Left ventricle myocardium superior (tissue), 1 donor: ENCODE measurements at regions of chr17 and their contacts with region 1.

Region 1: DNA sequence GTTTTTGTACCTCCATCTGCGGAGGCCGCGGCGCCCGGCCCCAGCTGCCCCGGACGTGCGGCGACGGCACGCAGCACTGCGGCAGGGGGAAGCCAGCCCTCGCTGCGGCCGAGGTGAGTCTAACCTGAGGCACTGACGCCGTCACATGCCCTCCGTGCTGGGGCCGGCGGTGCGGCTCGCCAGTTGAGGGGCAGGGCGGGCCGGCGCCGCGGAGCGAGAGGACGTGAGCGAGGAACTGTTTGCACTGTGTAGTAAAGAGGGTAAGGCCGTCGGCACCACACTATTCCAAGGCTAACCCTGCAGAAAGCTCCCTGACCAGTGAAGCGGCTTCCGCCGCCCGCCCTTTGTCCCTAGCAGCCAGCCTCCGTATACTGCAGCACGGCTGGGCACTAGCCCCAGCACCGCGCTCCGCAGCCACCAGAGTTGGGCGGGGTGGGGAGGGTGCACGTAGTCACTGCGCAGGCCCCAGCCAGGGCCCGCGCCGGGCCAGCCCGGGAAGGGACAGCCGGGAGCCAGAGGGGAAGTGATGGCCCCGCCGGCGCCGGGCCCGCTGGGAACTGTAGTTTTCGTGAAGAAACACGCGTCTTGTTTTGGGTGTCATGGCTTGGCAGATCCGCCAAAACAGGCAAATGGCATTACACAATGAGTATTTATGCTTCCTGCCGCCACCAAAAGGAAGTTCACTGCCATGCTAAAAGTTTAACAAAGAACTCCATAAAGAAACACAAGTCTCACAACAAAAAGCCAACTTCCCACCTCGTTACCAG is 580 bp upstream of the KANSL1 start:
- DNase-seq: peak; percentile 98
- ATAC-seq: peak; percentile 95

Region 2: DNA sequence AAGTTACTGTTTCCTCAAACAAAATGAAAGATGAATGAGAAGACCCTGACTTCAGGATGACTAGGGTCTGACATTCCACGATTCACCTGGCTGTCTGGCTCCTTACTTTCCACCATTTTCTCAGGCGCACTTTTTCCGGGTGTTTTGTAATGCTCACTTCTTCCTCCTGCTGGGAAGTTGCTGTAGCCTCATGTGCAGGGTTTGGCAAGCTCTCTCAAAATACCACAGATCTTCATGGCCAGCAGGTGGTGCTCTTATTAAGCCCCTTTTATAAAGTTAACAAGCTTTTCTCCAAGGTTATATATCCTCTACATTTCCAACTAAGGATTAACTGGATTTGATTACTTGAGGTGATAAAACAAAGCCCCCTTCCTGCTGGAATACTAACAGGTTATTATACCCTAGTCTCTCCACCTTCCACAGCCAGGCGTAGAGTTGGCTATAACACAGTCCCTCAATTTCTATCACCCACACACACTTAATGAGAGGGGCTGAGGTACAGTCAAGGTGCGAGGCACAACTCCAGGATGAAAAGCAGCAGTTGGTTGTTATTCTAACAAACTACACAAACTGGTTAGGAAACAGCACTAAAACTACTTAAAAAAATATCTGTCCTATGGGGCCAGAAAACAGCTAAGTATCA is 149.4 kb before region 1 on chr17:
- intact Hi-C with region 1: loop called (anchors 5 kb)
- DNase-seq: no peak
- ATAC-seq: peak; percentile 77